Activated T-helper 2 cell treated with anti-CD3 and anti-CD28 coated beads, Interferon-gamma antibody, Interleukin-2, Interleukin-4, amounts not matched to agents 10 μg/mL and 5 μg/mL and 100 μg/mL, durations not matched to agents 14 hours and 24 hours and 36 hours (primary cell): ENCODE measurements at regions of chr2 and their contacts with region 1.

Region 1: DNA sequence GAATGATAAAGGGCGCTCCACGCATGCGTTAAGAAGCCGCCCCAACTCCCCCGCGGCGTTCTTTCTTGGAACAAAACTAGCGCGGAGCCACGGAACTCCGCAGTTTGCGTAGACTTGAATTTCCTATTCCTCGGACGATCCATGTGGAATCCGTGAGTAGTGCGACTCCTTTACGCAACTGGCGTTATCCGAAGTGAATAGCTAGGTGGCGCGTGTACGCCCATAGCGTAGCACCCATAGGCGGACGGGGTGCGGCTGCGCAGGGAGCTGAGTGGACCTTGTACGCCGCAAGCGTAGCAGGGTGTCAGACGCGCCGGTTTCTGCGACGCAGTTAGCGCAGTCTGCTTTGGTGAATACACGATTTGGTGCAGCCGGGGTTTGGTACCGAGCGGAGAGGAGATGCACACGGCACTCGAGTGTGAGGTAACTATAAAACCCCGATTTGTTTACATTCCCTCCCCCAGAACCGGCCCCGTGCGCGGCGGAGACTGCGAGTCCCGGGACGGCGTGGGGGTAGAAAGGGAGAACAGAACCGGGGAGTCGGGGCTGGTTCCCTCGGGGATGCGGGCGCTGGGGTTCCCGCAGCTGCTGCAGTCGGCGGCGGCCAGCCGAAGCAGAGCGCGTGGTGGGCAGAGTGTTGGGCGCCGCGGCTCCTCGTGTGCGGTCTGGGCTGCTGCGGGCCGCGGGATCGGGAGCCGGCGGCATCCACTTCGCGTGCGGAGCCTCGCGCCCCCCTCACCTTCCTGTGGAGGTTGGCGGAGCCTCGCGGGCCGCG is at the start of gene SLC39A10:
- DNase-seq: peak; percentile 97
- H3K4me3 Mint-ChIP-seq: peak within 1 kb of the TSS; percentile 94
- H3K27ac Mint-ChIP-seq: peak within 1 kb of the TSS; percentile 100
- H3K4me1 Mint-ChIP-seq: peaks cover 25% of the 10 kb centered on the region
- H3K27me3 Mint-ChIP-seq: no peaks in the 10 kb centered on the region
- total RNA-seq, gene SLC39A10: 27.2 and 27.6 TPM in 2 replicates

Region 2: DNA sequence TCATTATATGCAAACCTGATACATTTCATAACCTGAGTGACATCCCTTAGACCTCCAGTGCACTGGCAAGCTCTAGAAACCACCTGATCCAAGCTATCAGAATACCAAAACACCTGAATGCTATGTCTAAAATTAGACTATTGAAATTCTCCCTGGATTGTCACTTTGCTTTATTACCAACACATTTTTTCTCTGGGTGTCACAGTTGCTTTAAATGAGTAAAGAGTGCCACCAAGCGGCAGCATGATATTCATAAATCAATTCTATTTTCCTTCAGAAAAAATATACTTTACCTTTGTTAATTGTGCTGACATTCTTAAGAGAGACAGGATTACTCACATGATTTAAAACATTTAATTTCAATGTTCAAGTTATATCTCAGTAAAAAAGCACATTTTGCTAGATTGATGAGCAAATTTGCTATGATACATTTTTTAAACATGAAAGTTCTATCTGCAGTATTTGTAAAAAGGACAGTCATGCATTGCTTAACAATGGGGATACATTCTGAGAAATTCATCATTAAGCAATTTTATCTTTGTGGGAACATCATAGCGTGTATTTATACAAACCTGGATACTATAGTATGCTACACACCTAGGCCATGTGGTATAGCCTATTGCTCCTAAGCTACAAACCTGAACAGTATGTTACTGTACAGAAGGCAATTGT is 338.5 kb before region 1 on chr2:
- intact Hi-C with region 1: loop called (anchors 5 kb)
- DNase-seq: peak; percentile 16
- H3K4me3 Mint-ChIP-seq: no peak overlapping the region
- H3K27ac Mint-ChIP-seq: no peak overlapping the region
- H3K4me1 Mint-ChIP-seq: peaks cover 19% of the 10 kb centered on the region
- H3K27me3 Mint-ChIP-seq: no peaks in the 10 kb centered on the region

Region 3: GRCh38 chr2:195543902-195544894 is 112.8 kb before region 1 on chr2:
- intact Hi-C with region 1: loop called (anchors 1 kb)
- DNase-seq: no peak
- H3K4me3 Mint-ChIP-seq: peak overlapping the region; percentile 43
- H3K27ac Mint-ChIP-seq: peak overlapping the region; percentile 71
- H3K4me1 Mint-ChIP-seq: peaks cover 57% of the 10 kb centered on the region
- H3K27me3 Mint-ChIP-seq: no peaks in the 10 kb centered on the region

Region 4: DNA sequence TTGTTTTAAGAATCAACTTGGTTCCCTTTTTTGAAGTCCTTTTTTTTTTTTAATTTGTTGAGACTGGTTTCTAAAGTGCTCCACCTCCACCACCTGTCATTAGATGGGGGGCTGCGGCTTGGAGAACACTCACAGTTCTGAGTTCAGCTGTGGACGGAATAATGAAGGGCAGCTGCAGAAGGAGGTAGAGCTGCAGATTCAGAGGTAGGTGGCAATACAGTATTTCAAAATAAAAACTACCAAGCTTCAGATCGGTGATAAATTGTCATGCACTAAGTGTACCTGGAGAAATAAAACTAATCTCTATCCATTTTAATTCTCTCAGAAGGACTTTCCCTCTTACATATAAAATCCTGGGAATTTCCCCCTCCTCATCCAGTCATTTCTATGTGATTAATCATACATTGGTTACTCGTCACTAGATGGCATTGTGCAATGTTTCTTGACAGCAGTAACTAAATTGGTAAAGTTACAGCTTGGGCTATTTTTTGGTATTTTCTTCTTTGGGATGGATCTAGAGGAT is 81.1 kb before region 1 on chr2:
- intact Hi-C with region 1: loop called (anchors 1 kb)
- DNase-seq: no peak
- H3K4me3 Mint-ChIP-seq: no peak overlapping the region
- H3K27ac Mint-ChIP-seq: no peak overlapping the region
- H3K4me1 Mint-ChIP-seq: peaks cover 49% of the 10 kb centered on the region
- H3K27me3 Mint-ChIP-seq: no peaks in the 10 kb centered on the region

Region 5: DNA sequence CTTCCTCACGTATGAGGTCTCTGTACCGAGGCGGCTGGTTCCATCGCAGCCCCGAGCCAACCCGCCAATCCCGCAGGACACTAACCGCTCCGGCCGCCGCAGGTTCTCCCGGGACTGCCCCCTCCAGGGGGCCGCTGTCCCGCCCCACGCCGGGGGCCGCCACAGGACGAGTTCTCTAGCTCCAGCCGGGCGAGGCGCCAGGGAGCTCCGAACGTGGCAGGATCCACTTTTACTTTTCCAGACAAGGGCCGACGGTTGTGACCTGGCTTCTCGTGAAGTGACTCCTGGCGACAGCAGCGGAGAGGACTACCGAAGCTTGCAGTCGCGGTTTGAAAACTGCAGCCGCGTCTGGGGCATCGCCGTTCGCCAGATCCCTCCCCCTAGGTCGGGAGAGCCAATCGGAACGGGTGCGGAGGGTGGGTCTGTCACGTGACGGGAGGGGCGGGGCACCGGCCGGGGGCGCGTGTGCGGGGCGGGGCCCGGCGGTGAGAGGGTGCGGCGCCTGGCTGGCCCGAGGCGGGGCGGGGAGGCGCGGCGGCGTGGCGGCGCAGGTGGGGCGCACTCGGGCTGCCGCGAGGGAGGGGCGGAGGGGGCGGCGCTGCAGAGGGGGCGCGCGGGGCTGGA is 514.3 kb after region 1 on chr2 and contains the start of gene STK17B:
- intact Hi-C with region 1: loop called (anchors 5 kb)
- DNase-seq: peak; percentile 94
- H3K4me3 Mint-ChIP-seq: peak within 1 kb of the TSS; percentile 96
- H3K27ac Mint-ChIP-seq: peak within 1 kb of the TSS; percentile 93
- H3K4me1 Mint-ChIP-seq: peaks cover 44% of the 10 kb centered on the region
- H3K27me3 Mint-ChIP-seq: no peaks in the 10 kb centered on the region
- total RNA-seq, gene STK17B: 176 and 178 TPM in 2 replicates